B cell (primary cell): ENCODE measurements at regions of chr11 and their contacts with region 1.

Region 1: GRCh38 chr11:61446211-61446651 is 16.3 kb downstream of the SDHAF2 start:
- DNase-seq: peak; percentile 64
- ATAC-seq: peak; percentile 60
- H3K4me3 ChIP-seq: no peak overlapping the region
- H3K4me3 Mint-ChIP-seq: no peak overlapping the region
- H3K27ac ChIP-seq: no peak overlapping the region
- H3K27ac Mint-ChIP-seq: no peak overlapping the region
- H3K4me1 ChIP-seq: no peaks in the 10 kb centered on the region
- H3K4me1 Mint-ChIP-seq: peaks cover 3% of the 10 kb centered on the region
- H3K27me3 ChIP-seq: no peaks in the 10 kb centered on the region
- H3K27me3 Mint-ChIP-seq: no peaks in the 10 kb centered on the region
- CTCF ChIP-seq: peak; percentile 66

Region 2: GRCh38 chr11:61378713-61379313 is 67.4 kb before region 1 on chr11:
- CTCF ChIA-PET with region 1: no interaction called
- POLR2A ChIA-PET with region 1: no interaction called
- intact Hi-C with region 1: no loop called
- DNase-seq: no peak
- ATAC-seq: no peak
- H3K4me3 ChIP-seq: no peak overlapping the region
- H3K4me3 Mint-ChIP-seq: no peak overlapping the region
- H3K27ac ChIP-seq: no peak overlapping the region
- H3K27ac Mint-ChIP-seq: no peak overlapping the region
- H3K4me1 ChIP-seq: no peaks in the 10 kb centered on the region
- H3K4me1 Mint-ChIP-seq: no peaks in the 10 kb centered on the region
- H3K27me3 ChIP-seq: no peaks in the 10 kb centered on the region
- H3K27me3 Mint-ChIP-seq: no peaks in the 10 kb centered on the region
- CTCF ChIP-seq: no peak

Region 3: GRCh38 chr11:61639816-61640443 is 193.7 kb after region 1 on chr11:
- CTCF ChIA-PET with region 1: interaction called, 13 read pairs
- POLR2A ChIA-PET with region 1: no interaction called
- intact Hi-C with region 1: no loop called
- DNase-seq: no peak
- ATAC-seq: no peak
- H3K4me3 ChIP-seq: no peak overlapping the region
- H3K4me3 Mint-ChIP-seq: no peak overlapping the region
- H3K27ac ChIP-seq: no peak overlapping the region
- H3K27ac Mint-ChIP-seq: no peak overlapping the region
- H3K4me1 ChIP-seq: peaks cover 0 to 4% of the 10 kb centered on the region in 2 donors
- H3K4me1 Mint-ChIP-seq: no peaks in the 10 kb centered on the region
- H3K27me3 ChIP-seq: peaks cover 0 to 7% (median 0%) of the 10 kb centered on the region in 4 experiments
- H3K27me3 Mint-ChIP-seq: no peaks in the 10 kb centered on the region
- CTCF ChIP-seq: no peak

Region 4: DNA sequence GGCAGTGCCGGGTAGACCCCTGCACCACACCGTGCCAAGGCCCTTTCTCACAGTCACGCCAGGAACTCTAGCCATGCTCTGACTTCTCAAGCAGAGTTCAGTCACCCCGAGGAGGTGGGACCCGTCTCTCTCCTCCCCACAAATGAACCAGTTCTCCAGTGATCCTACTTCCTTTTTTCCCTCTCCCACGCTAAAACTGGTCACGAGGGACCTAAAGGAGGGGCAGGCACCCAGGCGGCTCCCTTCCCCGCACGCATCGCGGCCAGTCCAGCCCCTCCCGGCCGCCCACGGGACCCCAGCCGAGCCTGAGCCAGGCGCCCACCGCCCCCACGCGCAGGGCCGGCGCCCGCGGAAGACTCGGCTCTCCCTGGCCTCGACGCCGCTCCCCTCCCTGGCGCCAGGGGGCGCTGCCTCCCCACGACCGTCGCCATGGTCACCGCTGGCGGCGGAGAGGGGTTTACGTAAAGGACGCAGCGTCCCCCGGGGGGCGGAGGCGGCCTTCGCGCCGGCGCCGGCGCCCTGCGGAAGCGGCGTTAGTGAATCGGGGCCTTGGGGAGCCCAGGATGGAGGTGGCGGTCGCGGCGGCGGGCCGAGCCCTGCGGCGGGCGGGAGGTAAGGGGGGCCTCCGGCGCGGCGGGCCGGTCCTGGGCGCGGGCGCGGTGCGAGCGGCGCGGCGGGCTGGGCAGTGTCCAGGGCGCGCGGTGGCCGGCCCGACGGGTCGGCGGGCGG is 233.8 kb after region 1 on chr11 and contains the start of gene DAGLA:
- CTCF ChIA-PET with region 1: no interaction called
- POLR2A ChIA-PET with region 1: no interaction called
- intact Hi-C with region 1: no loop called
- DNase-seq: peak; percentile 73
- ATAC-seq: peak; percentile 81
- H3K4me3 ChIP-seq: no peak within 1 kb of the TSS
- H3K4me3 Mint-ChIP-seq: peak within 1 kb of the TSS; percentile 55
- H3K27ac ChIP-seq: no peak within 1 kb of the TSS
- H3K27ac Mint-ChIP-seq: no peak within 1 kb of the TSS
- H3K4me1 ChIP-seq: peaks cover 3 to 12% of the 10 kb centered on the region in 2 donors
- H3K4me1 Mint-ChIP-seq: peaks cover 7% of the 10 kb centered on the region
- H3K27me3 ChIP-seq: peaks cover 0 to 32% (median 10%) of the 10 kb centered on the region in 4 experiments
- H3K27me3 Mint-ChIP-seq: peaks cover 42% of the 10 kb centered on the region
- CTCF ChIP-seq: peak; percentile 58
- total RNA-seq, gene DAGLA: 0.07 TPM in 1 of 2 replicates, not detected in the other

Region 5: DNA sequence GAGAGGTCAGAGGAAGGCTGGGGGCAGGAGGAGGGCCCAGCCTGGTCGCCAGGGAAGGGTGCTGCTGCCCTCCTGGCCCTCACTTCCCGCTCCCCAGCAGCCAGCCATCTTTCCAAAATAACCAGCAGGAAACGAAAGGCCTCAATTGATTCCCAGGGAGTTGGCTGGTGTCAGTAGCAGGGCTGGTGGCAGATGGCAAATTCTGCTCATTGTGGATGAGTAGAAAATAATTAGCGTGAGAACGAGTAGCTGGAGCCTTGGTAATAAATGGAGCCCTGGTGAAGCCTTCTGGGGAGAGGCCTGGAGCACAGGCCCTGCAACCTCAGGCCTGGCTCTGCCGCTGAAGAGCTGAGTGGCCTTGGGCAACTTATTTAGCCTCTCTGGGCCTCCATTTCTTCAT is 265.3 kb after region 1 on chr11:
- CTCF ChIA-PET with region 1: no interaction called
- POLR2A ChIA-PET with region 1: no interaction called
- intact Hi-C with region 1: no loop called
- DNase-seq: no peak
- ATAC-seq: no peak
- H3K4me3 ChIP-seq: no peak overlapping the region
- H3K4me3 Mint-ChIP-seq: no peak overlapping the region
- H3K27ac ChIP-seq: no peak overlapping the region
- H3K27ac Mint-ChIP-seq: no peak overlapping the region
- H3K4me1 ChIP-seq: no peaks in the 10 kb centered on the region
- H3K4me1 Mint-ChIP-seq: no peaks in the 10 kb centered on the region
- H3K27me3 ChIP-seq: no peaks in the 10 kb centered on the region
- H3K27me3 Mint-ChIP-seq: peaks cover 11% of the 10 kb centered on the region
- CTCF ChIP-seq: no peak